A673 (cell line): ENCODE measurements at regions of chr15 and their contacts with region 1.

Region 1: GRCh38 chr15:97759363-97759762 is 201.1 kb upstream of the ARRDC4 start:
- DNase-seq: no peak
- H3K4me3 ChIP-seq: no peak overlapping the region
- H3K27ac ChIP-seq: no peak overlapping the region
- H3K4me1 ChIP-seq: no peaks in the 10 kb centered on the region
- H3K27me3 ChIP-seq: no peaks in the 10 kb centered on the region
- CTCF ChIP-seq: no peak

Region 2: GRCh38 chr15:96234109-96234892 is 1525.1 kb before region 1 on chr15:
- CTCF ChIA-PET with region 1: no interaction called
- POLR2A ChIA-PET with region 1: no interaction called
- intact Hi-C with region 1: no loop called
- DNase-seq: no peak
- H3K4me3 ChIP-seq: no peak overlapping the region
- H3K27ac ChIP-seq: no peak overlapping the region
- H3K4me1 ChIP-seq: no peaks in the 10 kb centered on the region
- H3K27me3 ChIP-seq: no peaks in the 10 kb centered on the region
- CTCF ChIP-seq: no peak

Region 3: DNA sequence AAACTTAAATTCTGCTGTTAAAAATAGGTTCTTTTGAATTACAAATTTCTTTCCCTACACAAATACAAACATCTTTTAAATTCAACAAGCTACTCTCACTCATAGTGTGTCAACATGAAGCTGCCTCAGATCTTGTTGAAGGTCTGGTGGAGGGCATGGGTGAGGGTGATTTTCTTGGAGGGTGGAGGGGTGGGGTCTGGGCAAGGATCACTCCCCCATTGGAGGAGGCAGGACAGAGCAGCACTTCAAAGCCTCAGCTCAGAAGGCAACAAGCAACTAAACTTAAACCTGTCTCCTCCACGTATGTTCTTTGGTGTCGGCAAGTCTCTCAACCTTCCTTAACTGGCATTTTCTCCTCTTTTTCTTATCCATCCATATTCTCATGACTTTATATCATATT is 698.0 kb before region 1 on chr15:
- CTCF ChIA-PET with region 1: no interaction called
- POLR2A ChIA-PET with region 1: no interaction called
- intact Hi-C with region 1: loop called (anchors 10 kb)
- DNase-seq: no peak
- H3K4me3 ChIP-seq: no peak overlapping the region
- H3K27ac ChIP-seq: peak overlapping the region; percentile 80
- H3K4me1 ChIP-seq: peaks cover 60% of the 10 kb centered on the region
- H3K27me3 ChIP-seq: no peaks in the 10 kb centered on the region
- CTCF ChIP-seq: no peak

Region 4: DNA sequence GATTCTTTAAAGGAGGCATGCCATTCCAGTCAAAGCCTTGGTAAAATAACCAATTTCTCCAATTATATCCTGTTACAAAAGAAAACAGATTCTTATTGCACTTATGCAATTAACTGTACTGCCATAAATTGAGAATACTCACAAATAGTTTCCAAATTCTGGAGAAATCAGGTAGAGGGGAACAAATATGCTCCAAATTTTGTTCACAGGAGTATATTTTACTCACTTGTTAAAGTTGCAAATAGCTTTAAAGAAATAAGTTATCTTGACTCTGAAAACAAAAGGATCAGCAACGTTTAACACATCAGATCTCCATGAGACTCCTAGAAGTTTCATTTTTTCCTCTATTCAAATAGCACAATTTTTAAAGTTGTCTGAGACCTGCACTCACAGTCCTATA is 511.0 kb before region 1 on chr15:
- CTCF ChIA-PET with region 1: no interaction called
- POLR2A ChIA-PET with region 1: no interaction called
- intact Hi-C with region 1: loop called (anchors 5 kb)
- DNase-seq: no peak
- H3K4me3 ChIP-seq: no peak overlapping the region
- H3K27ac ChIP-seq: no peak overlapping the region
- H3K4me1 ChIP-seq: peaks cover 5% of the 10 kb centered on the region
- H3K27me3 ChIP-seq: no peaks in the 10 kb centered on the region
- CTCF ChIP-seq: no peak

Region 5: GRCh38 chr15:97694456-97694855 is 64.9 kb before region 1 on chr15:
- CTCF ChIA-PET with region 1: no interaction called
- POLR2A ChIA-PET with region 1: no interaction called
- intact Hi-C with region 1: no loop called
- DNase-seq: no peak
- H3K4me3 ChIP-seq: no peak overlapping the region
- H3K27ac ChIP-seq: no peak overlapping the region
- H3K4me1 ChIP-seq: no peaks in the 10 kb centered on the region
- H3K27me3 ChIP-seq: no peaks in the 10 kb centered on the region
- CTCF ChIP-seq: no peak

Region 6: DNA sequence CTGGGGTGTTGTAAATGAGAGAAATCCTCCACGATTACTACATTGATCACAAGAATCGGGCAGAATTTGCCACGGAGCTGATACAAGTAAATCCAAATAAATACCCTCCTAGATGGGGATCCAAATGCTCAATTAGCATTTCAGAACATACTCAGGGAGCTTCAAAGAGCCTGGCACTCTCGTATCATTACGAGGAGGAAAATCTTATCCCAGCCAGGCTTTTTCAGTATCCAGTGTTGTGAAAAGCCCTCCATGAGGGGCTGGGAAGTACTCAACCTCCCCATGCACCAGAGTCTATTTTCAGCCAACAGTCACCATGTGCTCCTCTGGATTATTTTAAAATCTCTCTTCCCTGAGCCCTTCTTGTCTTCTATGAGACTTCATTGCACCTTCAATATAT is 78.5 kb after region 1 on chr15:
- CTCF ChIA-PET with region 1: no interaction called
- POLR2A ChIA-PET with region 1: no interaction called
- intact Hi-C with region 1: no loop called
- DNase-seq: no peak
- H3K4me3 ChIP-seq: no peak overlapping the region
- H3K27ac ChIP-seq: no peak overlapping the region
- H3K4me1 ChIP-seq: no peaks in the 10 kb centered on the region
- H3K27me3 ChIP-seq: no peaks in the 10 kb centered on the region
- CTCF ChIP-seq: no peak

Region 7: DNA sequence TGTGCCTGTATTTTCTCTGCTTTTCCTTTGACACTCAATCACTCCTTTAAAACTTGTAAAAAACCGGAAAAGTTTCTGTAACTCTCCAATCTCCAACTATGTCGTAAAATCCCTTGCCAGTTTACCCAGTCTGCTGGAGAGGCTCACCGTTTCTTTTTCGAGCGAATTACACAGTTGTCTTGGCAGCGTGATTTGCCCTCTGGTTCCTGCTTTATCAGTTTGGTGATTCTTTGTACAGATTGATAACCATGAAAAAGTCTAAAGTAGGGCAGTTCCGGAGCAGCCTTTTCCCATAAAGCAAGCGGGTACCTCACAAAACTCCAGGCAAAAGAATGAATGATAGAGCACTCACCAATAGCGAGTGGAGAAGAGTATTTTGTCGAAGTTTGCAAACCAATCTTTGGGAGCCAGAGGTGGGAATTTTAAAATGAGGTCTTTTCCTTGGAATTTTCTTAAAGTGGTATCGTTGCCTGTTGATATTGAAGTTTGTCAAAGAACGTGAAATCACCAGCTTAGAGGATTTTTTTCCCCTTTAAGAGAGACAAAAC is 1490.0 kb after region 1 on chr15 and contains the start of gene TTC23:
- CTCF ChIA-PET with region 1: no interaction called
- POLR2A ChIA-PET with region 1: no interaction called
- intact Hi-C with region 1: no loop called
- DNase-seq: peak; percentile 95
- H3K4me3 ChIP-seq: peak within 1 kb of the TSS; percentile 78
- H3K27ac ChIP-seq: peak within 1 kb of the TSS; percentile 93
- H3K4me1 ChIP-seq: peaks cover 22% of the 10 kb centered on the region
- H3K27me3 ChIP-seq: no peaks in the 10 kb centered on the region
- CTCF ChIP-seq: no peak
- total RNA-seq, gene TTC23: 13.4 and 15.9 TPM in 2 replicates